ENCODE measurements at regions of chr7 and their contacts with region 1.

Region 1: GRCh38 chr7:138886501-138886917 is 88.5 kb upstream of the ATP6V0A4 start:
- DNase-seq: peak in 8 of 14 experiments; percentile 13 to 85 (median 52)
- ATAC-seq: peak; percentile 95
- H3K4me3 ChIP-seq: no peak overlapping the region
- H3K4me3 Mint-ChIP-seq: no peak overlapping the region
- H3K27ac ChIP-seq: no peak overlapping the region
- H3K27ac Mint-ChIP-seq: peak overlapping the region; percentile 2
- H3K4me1 ChIP-seq: peaks cover 16% of the 10 kb centered on the region
- H3K4me1 Mint-ChIP-seq: peaks cover 20% of the 10 kb centered on the region
- H3K27me3 ChIP-seq: no peaks in the 10 kb centered on the region
- H3K27me3 Mint-ChIP-seq: no peaks in the 10 kb centered on the region
- CTCF ChIP-seq: peak; percentile 75

Region 2: GRCh38 chr7:138801256-138801655 is 85.3 kb before region 1 on chr7:
- CTCF ChIA-PET with region 1: no interaction called
- POLR2A ChIA-PET with region 1: no interaction called
- intact Hi-C with region 1: no loop called
- DNase-seq: no peak
- ATAC-seq: no peak
- H3K4me3 ChIP-seq: no peak overlapping the region
- H3K4me3 Mint-ChIP-seq: no peak overlapping the region
- H3K27ac ChIP-seq: no peak overlapping the region
- H3K27ac Mint-ChIP-seq: no peak overlapping the region
- H3K4me1 ChIP-seq: peaks cover 7% of the 10 kb centered on the region
- H3K4me1 Mint-ChIP-seq: peaks cover 6% of the 10 kb centered on the region
- H3K27me3 ChIP-seq: no peaks in the 10 kb centered on the region
- H3K27me3 Mint-ChIP-seq: peaks cover 4% of the 10 kb centered on the region
- CTCF ChIP-seq: no peak

Region 3: GRCh38 chr7:138848056-138848980 is 38.2 kb before region 1 on chr7:
- CTCF ChIA-PET with region 1: no interaction called
- POLR2A ChIA-PET with region 1: no interaction called
- intact Hi-C with region 1: no loop called
- DNase-seq: no peak
- ATAC-seq: no peak
- H3K4me3 ChIP-seq: no peak overlapping the region
- H3K4me3 Mint-ChIP-seq: no peak overlapping the region
- H3K27ac ChIP-seq: no peak overlapping the region
- H3K27ac Mint-ChIP-seq: no peak overlapping the region
- H3K4me1 ChIP-seq: no peaks in the 10 kb centered on the region
- H3K4me1 Mint-ChIP-seq: no peaks in the 10 kb centered on the region
- H3K27me3 ChIP-seq: no peaks in the 10 kb centered on the region
- H3K27me3 Mint-ChIP-seq: no peaks in the 10 kb centered on the region
- CTCF ChIP-seq: no peak

Region 4: GRCh38 chr7:138898255-138898654 is 11.7 kb after region 1 on chr7:
- CTCF ChIA-PET with region 1: interaction called, 29 read pairs
- POLR2A ChIA-PET with region 1: interaction called, 19 read pairs
- intact Hi-C with region 1: loop called in 1 of 2 experiments (anchors 1 kb)
- DNase-seq: peak in 8 of 14 experiments; percentile 6 to 61 (median 22)
- ATAC-seq: peak; percentile 73
- H3K4me3 ChIP-seq: no peak overlapping the region
- H3K4me3 Mint-ChIP-seq: no peak overlapping the region
- H3K27ac ChIP-seq: no peak overlapping the region
- H3K27ac Mint-ChIP-seq: no peak overlapping the region
- H3K4me1 ChIP-seq: peaks cover 15% of the 10 kb centered on the region
- H3K4me1 Mint-ChIP-seq: peaks cover 35% of the 10 kb centered on the region
- H3K27me3 ChIP-seq: no peaks in the 10 kb centered on the region
- H3K27me3 Mint-ChIP-seq: peaks cover 16% of the 10 kb centered on the region
- CTCF ChIP-seq: no peak

Region 5: DNA sequence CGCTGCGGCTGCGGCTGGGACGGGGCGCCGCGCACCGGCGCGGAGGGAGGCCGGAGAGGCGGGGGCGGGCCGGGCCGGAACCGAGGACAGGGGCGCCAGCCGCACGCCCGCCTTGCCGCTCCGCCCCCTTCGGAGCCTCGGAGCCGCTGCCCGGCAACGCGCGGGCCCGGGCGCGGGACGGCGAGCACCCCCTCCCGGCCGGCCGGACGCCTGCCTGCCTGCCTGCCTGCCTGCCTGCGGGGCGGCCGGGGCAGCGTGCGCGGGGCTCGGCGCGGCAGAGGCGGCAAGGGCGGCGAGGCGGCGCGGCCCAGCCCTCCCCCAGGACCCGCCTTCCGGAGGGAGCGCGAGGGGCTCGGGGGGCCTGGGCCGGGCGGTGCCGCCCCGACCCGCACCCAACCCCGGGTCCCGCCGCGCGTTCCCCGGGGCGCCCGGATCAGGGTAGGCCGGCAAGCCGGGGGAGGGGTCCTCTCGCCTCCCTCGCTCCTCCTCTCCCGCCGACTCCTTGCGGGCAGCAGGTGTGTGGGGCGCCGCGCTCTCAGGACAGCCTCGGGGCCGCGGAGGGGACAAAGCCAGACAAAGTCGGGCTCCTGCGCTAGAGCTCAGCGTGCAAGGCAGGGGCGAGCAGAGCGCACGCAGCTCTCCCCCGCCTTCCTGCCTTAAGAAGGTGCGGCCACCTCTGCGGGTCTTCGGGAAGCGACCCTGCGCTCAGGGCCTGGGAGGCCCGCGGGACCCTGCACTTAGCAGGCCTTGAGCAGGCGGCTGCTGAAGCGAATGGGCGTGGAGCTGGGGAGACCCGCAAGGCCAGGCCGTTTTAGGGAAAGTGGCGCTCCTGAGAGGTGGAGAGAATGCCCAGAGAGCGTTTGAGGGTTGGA is 95.1 kb after region 1 on chr7 and contains the start of gene KIAA1549:
- CTCF ChIA-PET with region 1: interaction called, 9 read pairs
- POLR2A ChIA-PET with region 1: interaction called, 7 read pairs
- intact Hi-C with region 1: loop called (anchors 1 to 2 kb)
- DNase-seq: peak in 12 of 14 experiments; percentile 13 to 78 (median 39)
- ATAC-seq: peak; percentile 66
- H3K4me3 ChIP-seq: peak within 1 kb of the TSS; percentile 46
- H3K4me3 Mint-ChIP-seq: peak within 1 kb of the TSS; percentile 90
- H3K27ac ChIP-seq: no peak within 1 kb of the TSS
- H3K27ac Mint-ChIP-seq: no peak within 1 kb of the TSS
- H3K4me1 ChIP-seq: peaks cover 13% of the 10 kb centered on the region
- H3K4me1 Mint-ChIP-seq: peaks cover 19% of the 10 kb centered on the region
- H3K27me3 ChIP-seq: peaks cover 29 to 30% of the 10 kb centered on the region in 2 experiments
- H3K27me3 Mint-ChIP-seq: peaks cover 44% of the 10 kb centered on the region
- CTCF ChIP-seq: no peak
- total RNA-seq, gene KIAA1549: not detected

Region 6: GRCh38 chr7:139124084-139124914 is 237.8 kb after region 1 on chr7:
- CTCF ChIA-PET with region 1: no interaction called
- POLR2A ChIA-PET with region 1: interaction called, 8 read pairs
- intact Hi-C with region 1: loop called (anchors 1 to 2 kb)
- DNase-seq: no peak
- ATAC-seq: no peak
- H3K4me3 ChIP-seq: no peak overlapping the region
- H3K4me3 Mint-ChIP-seq: no peak overlapping the region
- H3K27ac ChIP-seq: no peak overlapping the region
- H3K27ac Mint-ChIP-seq: no peak overlapping the region
- H3K4me1 ChIP-seq: peaks cover 25% of the 10 kb centered on the region
- H3K4me1 Mint-ChIP-seq: peaks cover 34% of the 10 kb centered on the region
- H3K27me3 ChIP-seq: no peaks in the 10 kb centered on the region
- H3K27me3 Mint-ChIP-seq: no peaks in the 10 kb centered on the region
- CTCF ChIP-seq: no peak

Measured in CD4-positive, alpha-beta T cell (primary cell).